T-cell (primary cell): ENCODE measurements at regions of chr6 and their contacts with region 1.

Region 1: GRCh38 chr6:33801611-33802010 is 2.2 kb downstream of the MLN start:
- DNase-seq: no peak
- ATAC-seq: no peak
- H3K4me3 ChIP-seq: no peak overlapping the region
- H3K4me3 Mint-ChIP-seq: no peak overlapping the region
- H3K27ac ChIP-seq: no peak overlapping the region
- H3K27ac Mint-ChIP-seq: no peak overlapping the region
- H3K4me1 ChIP-seq: no peaks in the 10 kb centered on the region
- H3K4me1 Mint-ChIP-seq: peaks cover 0 to under 1% (median under 1%) of the 10 kb centered on the region in 3 donors
- H3K27me3 ChIP-seq: peaks cover 0 to 60% of the 10 kb centered on the region in 2 experiments
- H3K27me3 Mint-ChIP-seq: peaks cover 13 to 35% of the 10 kb centered on the region in 2 donors

Region 2: GRCh38 chr6:34027445-34027936 is 225.9 kb after region 1 on chr6:
- CTCF ChIA-PET with region 1: no interaction called
- POLR2A ChIA-PET with region 1: no interaction called
- DNase-seq: peak; percentile 15 to 77 (median 56)
- ATAC-seq: peak; percentile 56 to 81 (median 70)
- H3K4me3 ChIP-seq: no peak overlapping the region
- H3K4me3 Mint-ChIP-seq: no peak overlapping the region
- H3K27ac ChIP-seq: no peak overlapping the region
- H3K27ac Mint-ChIP-seq: no peak overlapping the region
- H3K4me1 ChIP-seq: peaks cover 0 to 4% of the 10 kb centered on the region in 2 experiments
- H3K4me1 Mint-ChIP-seq: peaks cover 0 to 6% (median 0%) of the 10 kb centered on the region in 3 donors
- H3K27me3 ChIP-seq: peaks cover 0 to 55% of the 10 kb centered on the region in 2 experiments
- H3K27me3 Mint-ChIP-seq: peaks cover 0 to 6% of the 10 kb centered on the region in 2 donors

Region 3: GRCh38 chr6:34650823-34651222 is 849.2 kb after region 1 on chr6:
- CTCF ChIA-PET with region 1: no interaction called
- POLR2A ChIA-PET with region 1: interaction called in 1 of 2 experiments, 16 read pairs
- DNase-seq: no peak
- ATAC-seq: no peak
- H3K4me3 ChIP-seq: no peak overlapping the region
- H3K4me3 Mint-ChIP-seq: no peak overlapping the region
- H3K27ac ChIP-seq: no peak overlapping the region
- H3K27ac Mint-ChIP-seq: no peak overlapping the region
- H3K4me1 ChIP-seq: peaks cover 0 to 3% of the 10 kb centered on the region in 2 experiments
- H3K4me1 Mint-ChIP-seq: peaks cover 37 to 48% (median 45%) of the 10 kb centered on the region in 3 donors
- H3K27me3 ChIP-seq: no peaks in the 10 kb centered on the region
- H3K27me3 Mint-ChIP-seq: no peaks in the 10 kb centered on the region